Tibial artery (tissue), 4 donors: ENCODE measurements at regions of chr22 and their contacts with region 1.

Region 1: DNA sequence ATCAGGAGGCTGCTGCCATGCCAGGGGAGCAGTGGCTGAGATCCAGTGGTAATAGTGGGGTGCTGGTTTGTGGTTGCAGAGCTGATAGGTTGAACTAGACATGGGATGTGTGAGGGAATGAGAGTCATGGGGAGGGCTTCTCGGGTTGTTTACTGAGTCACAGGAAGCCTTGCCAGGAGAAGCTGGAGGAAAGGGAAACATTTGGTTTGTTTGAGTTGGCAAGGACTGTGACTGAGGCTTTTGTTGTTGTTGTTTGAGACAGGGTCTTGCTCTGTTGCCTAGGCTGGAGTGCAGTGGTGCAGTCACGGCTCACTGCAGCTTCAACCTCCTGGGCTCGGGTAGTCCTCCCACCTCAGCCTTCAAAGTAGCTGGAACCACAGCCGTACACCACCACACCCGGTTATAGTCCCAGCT is 49.3 kb downstream of the CABIN1 start:
- DNase-seq: peak in 1 of 2 donors; percentile 76
- H3K4me3 ChIP-seq: no peak overlapping the region
- H3K27ac ChIP-seq: peak overlapping the region; percentile 71 to 72
- H3K4me1 ChIP-seq: peaks cover 0 to 36% (median 20%) of the 10 kb centered on the region in 4 donors
- H3K27me3 ChIP-seq: no peaks in the 10 kb centered on the region
- CTCF ChIP-seq: no peak

Region 2: DNA sequence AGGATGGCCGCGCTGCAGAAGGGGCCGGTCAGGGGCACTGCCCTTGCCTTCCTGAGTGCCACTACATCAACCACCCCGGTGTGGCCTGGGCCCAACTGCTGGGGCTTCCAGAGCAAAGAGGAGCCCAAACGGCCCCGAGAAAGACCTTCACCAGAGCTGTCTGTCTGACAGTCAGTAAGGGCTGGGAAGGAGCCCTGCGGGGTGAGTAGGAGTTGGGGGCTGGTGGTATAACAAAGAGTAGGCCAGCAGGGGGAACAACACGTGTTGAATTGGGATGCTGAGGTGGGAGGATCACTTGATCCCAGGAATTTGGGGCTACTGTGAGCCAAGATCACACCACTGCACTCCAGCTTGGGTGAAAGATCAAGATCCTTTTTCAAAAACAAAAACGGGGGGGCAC is 59.1 kb before region 1 on chr22:
- intact Hi-C with region 1: no loop called
- DNase-seq: no peak
- H3K4me3 ChIP-seq: no peak overlapping the region
- H3K27ac ChIP-seq: no peak overlapping the region
- H3K4me1 ChIP-seq: peaks cover 0 to 16% (median 11%) of the 10 kb centered on the region in 4 donors
- H3K27me3 ChIP-seq: no peaks in the 10 kb centered on the region
- CTCF ChIP-seq: no peak

Region 3: GRCh38 chr22:24011735-24012068 is 48.7 kb before region 1 on chr22:
- intact Hi-C with region 1: loop called (anchors 5 kb)
- DNase-seq: no peak
- H3K4me3 ChIP-seq: peak overlapping the region; percentile 93 to 94
- H3K27ac ChIP-seq: peak overlapping the region; percentile 84 to 87
- H3K4me1 ChIP-seq: peaks cover 0 to 19% (median 14%) of the 10 kb centered on the region in 4 donors
- H3K27me3 ChIP-seq: no peaks in the 10 kb centered on the region
- CTCF ChIP-seq: no peak

Region 4: DNA sequence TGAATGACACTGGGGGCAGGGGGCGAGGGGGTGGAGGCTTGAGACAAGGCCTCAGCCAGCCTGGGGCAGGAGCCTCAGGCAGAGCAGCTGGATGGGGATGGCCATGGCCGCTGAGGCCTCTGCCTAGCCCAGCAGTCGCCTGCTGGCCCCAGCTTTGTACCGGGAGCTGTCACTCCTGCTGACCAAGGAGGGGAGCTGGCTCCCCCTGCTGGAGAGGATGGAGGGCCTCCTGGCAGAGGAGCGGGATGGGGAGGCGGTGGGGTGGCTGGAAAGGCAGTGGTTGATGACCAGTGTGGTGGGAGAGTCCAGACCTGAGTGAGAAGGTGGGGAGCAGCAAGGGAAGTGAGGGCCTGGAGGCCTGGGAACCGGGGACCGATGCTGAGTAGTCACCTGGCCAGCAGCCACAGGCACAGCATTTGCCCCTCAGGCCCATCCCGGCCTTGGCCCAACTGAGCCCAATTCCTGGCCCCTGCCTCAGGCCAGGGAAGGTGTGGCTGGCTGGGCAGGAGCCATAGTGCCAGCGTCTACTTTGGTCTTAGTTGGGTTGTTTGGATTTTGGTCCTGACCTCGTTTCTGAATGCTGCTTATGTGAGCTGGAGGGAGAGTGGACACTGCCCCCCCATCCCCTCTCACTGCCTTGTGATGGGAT is 114.9 kb after region 1 on chr22:
- intact Hi-C with region 1: loop called (anchors 2 kb)
- DNase-seq: peak; percentile 87 to 94
- H3K4me3 ChIP-seq: no peak overlapping the region
- H3K27ac ChIP-seq: peak overlapping the region; percentile 87 to 96
- H3K4me1 ChIP-seq: peaks cover 14 to 66% (median 58%) of the 10 kb centered on the region in 4 donors
- H3K27me3 ChIP-seq: no peaks in the 10 kb centered on the region
- CTCF ChIP-seq: peak; percentile 87 to 93